ENCODE measurements at regions of chr7 and their contacts with region 1.

Region 1: GRCh38 chr7:134632937-134633540 is 13.6 kb upstream of the BPGM start:
- DNase-seq: peak; percentile 49
- ATAC-seq: peak; percentile 65
- H3K4me3 Mint-ChIP-seq: no peak overlapping the region
- H3K27ac Mint-ChIP-seq: no peak overlapping the region
- H3K4me1 Mint-ChIP-seq: peaks cover 17% of the 10 kb centered on the region
- H3K27me3 Mint-ChIP-seq: peaks cover 18% of the 10 kb centered on the region

Region 2: DNA sequence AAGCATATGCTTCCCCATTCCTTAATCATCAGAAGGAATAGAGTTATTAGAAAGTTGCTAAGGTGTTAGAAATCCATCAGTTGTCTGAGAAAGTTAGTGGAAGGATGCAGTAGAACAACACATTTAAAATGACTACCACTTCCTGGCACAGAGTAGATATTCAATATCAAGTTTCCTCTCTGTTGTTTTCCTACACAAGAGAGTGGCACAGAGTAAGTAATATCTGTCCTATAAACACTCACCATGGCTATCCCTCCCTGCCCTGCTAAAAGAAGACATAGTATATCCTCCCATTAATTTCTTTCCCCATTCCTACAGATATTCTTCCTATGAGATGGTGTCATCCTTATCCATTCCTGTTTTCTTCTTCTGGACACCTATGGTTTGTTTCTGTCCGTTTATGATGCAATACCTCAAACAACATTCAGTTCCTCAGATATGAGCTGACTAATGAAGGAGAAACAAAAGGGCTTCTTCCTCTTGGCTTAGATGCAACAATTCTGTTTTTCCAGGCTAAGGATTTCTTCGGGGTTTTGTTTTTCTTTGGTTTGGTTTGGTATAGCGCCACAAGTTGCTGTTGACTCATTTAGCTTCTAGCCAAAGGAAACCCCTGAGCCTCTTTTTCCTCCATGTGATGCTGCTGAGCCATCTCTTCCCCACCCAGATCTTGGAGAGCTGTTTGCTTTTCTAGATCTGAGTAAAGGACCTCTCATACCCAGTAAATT is 19.3 kb before region 1 on chr7:
- CTCF ChIA-PET with region 1: interaction called, 21 read pairs
- POLR2A ChIA-PET with region 1: no interaction called
- DNase-seq: no peak
- ATAC-seq: no peak
- H3K4me3 Mint-ChIP-seq: no peak overlapping the region
- H3K27ac Mint-ChIP-seq: no peak overlapping the region
- H3K4me1 Mint-ChIP-seq: peaks cover 9% of the 10 kb centered on the region
- H3K27me3 Mint-ChIP-seq: peaks cover 18% of the 10 kb centered on the region

Region 3: DNA sequence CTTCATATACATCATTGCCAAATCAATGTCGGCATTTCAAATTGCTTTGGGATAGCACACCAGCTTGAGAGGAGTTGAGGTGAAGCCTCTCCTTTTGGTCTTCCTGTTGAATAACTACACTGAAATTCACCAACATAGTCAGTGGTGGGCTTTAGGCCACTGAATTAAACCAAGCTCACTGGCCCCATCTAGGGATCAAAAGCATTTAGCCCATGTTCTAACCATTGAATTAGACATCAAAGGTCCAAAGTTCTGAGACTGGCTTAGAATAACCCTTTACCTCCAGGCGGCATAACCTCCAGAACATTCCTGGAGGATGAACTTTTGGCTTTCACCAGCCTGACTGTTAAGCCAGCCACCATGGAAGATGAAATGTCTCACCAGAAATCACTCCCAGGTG is 68.2 kb after region 1 on chr7:
- CTCF ChIA-PET with region 1: interaction called, 45 read pairs
- POLR2A ChIA-PET with region 1: no interaction called
- DNase-seq: peak; percentile 36
- ATAC-seq: no peak
- H3K4me3 Mint-ChIP-seq: no peak overlapping the region
- H3K27ac Mint-ChIP-seq: no peak overlapping the region
- H3K4me1 Mint-ChIP-seq: no peaks in the 10 kb centered on the region
- H3K27me3 Mint-ChIP-seq: no peaks in the 10 kb centered on the region

Region 4: GRCh38 chr7:134750083-134751062 is 117.3 kb after region 1 on chr7:
- CTCF ChIA-PET with region 1: interaction called, 39 read pairs
- POLR2A ChIA-PET with region 1: no interaction called
- DNase-seq: peak; percentile 71
- ATAC-seq: peak; percentile 87
- H3K4me3 Mint-ChIP-seq: no peak overlapping the region
- H3K27ac Mint-ChIP-seq: no peak overlapping the region
- H3K4me1 Mint-ChIP-seq: no peaks in the 10 kb centered on the region
- H3K27me3 Mint-ChIP-seq: peaks cover 3% of the 10 kb centered on the region

Region 5: DNA sequence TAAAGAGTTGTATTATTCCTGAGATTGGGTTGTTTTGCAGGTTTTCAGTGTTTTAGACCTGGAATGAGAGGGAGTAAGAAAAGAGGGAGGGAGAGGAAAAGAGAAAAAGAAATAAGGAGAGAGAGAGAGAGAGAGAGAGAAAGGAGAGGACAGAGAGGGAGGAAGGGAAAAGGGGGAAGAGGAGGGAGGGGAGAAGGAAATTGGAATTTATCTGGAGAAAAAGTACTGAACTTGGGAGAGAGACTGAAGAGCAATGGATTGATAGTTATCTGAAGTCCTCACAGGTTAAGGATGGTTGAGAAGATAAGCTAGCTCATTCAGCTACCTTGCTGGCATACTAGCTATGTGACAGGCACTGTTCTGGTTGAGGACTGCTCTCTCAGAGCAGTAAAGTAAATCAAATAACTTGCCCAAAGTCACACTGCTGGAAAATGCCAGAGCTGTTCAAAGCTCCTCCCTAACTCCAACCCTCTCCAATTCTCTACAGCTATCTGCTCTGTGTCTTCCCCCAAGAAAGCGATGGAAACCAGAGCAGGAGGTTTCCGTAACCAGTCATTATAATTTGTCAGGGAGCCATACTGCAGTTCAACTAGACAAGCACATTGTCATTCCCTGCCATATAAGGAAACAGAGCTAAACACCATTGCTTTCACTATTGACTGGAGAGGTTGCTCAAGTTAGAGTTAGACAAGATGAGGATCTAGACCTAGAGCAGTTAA is 157.1 kb after region 1 on chr7:
- CTCF ChIA-PET with region 1: no interaction called
- POLR2A ChIA-PET with region 1: no interaction called
- DNase-seq: no peak
- ATAC-seq: no peak
- H3K4me3 Mint-ChIP-seq: no peak overlapping the region
- H3K27ac Mint-ChIP-seq: no peak overlapping the region
- H3K4me1 Mint-ChIP-seq: no peaks in the 10 kb centered on the region
- H3K27me3 Mint-ChIP-seq: peaks cover 4% of the 10 kb centered on the region

Region 6: GRCh38 chr7:134954197-134955082 is 321.4 kb after region 1 on chr7:
- CTCF ChIA-PET with region 1: interaction called, 22 read pairs
- POLR2A ChIA-PET with region 1: no interaction called
- DNase-seq: no peak
- ATAC-seq: no peak
- H3K4me3 Mint-ChIP-seq: no peak overlapping the region
- H3K27ac Mint-ChIP-seq: no peak overlapping the region
- H3K4me1 Mint-ChIP-seq: peaks cover 2% of the 10 kb centered on the region
- H3K27me3 Mint-ChIP-seq: no peaks in the 10 kb centered on the region

Region 7: DNA sequence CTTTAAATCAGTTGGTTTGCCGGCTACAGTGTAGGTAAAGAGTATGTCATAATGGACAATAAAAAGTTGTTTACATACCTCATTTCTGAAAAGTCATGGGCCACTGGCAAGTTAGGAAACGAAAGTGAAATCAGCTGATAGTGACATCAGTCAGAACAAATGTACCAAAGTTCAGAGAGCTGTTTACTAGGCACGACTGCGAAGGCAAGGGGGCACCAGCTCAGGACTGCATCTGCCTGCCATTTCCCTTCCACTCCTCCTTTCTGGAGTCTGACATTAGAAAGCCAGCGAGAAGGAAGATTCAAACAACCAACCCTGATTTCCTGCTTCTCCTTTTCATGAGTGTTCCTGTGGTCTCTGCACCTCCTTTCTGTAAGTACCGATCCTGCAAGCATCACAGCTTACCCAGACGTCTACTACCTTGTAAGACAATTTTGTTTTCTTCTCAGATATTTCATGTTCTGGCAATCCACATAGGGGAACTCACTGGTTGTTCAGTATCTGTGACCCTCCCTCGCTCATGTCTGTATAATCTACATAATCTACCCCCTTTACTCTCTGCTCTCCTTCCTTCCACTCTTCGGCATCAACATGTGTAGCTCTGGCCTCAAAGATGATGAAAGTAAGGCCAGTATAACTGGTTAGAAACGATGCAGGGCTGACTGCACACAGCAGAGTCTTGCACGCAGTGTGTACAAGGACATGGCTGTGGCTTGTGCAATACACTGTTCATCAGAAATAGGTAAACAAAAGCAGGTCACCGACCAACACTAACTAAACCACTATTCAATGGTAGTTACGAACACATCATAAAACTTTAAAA is 515.1 kb after region 1 on chr7 and contains the start of gene TMEM140:
- CTCF ChIA-PET with region 1: no interaction called
- POLR2A ChIA-PET with region 1: no interaction called
- DNase-seq: peak; percentile 77
- ATAC-seq: peak; percentile 84
- H3K4me3 Mint-ChIP-seq: peak within 1 kb of the TSS; percentile 84
- H3K27ac Mint-ChIP-seq: peak within 1 kb of the TSS; percentile 95
- H3K4me1 Mint-ChIP-seq: peaks cover 53% of the 10 kb centered on the region
- H3K27me3 Mint-ChIP-seq: no peaks in the 10 kb centered on the region
- total RNA-seq, gene TMEM140: 12.6 to 12.7 TPM

Measured in activated CD8-positive, alpha-beta T cell treated with anti-CD3 and anti-CD28 coated beads, Interleukin-2, amount 10 ng/mL, durations not matched to agents 7 days and 5 days (primary cell).